Endothelial cell of umbilical vein (primary cell): ENCODE measurements at regions of chr12 and their contacts with region 1.

Region 1: DNA sequence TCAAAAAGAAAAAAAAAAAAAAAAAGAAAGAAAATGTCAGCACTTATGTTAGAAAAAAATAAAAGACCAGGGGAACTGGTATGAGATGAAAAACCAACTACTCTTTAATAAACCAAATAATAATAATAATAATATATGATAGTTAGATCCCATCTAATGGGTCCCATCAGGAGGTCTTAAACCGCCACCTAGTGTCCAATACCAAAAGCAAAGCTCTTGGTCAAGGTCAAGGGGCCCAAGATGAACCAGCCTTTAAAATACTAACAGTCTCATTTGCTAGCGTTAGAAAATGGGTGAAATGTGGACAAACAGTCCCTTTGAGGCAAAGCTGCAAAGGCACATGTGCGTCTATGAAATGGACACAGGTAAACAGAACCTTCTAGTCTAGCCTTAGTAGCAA is 12.3 kb downstream of the BRAP start:
- DNase-seq: peak; percentile 31
- H3K4me3 ChIP-seq: no peak overlapping the region
- H3K27ac ChIP-seq: no peak overlapping the region
- H3K4me1 ChIP-seq: no peaks in the 10 kb centered on the region
- H3K27me3 ChIP-seq: no peaks in the 10 kb centered on the region
- CTCF ChIP-seq: peak; percentile 19 to 37
- POLR2A ChIP-seq: no peak

Region 2: GRCh38 chr12:111330800-111331752 is 342.4 kb before region 1 on chr12:
- CTCF ChIA-PET with region 1: interaction called, 27 read pairs
- POLR2A ChIA-PET with region 1: no interaction called
- dilution Hi-C with region 1: no loop called
- intact Hi-C with region 1: loop called (anchors 5 kb)
- DNase-seq: peak; percentile 59
- H3K4me3 ChIP-seq: no peak overlapping the region
- H3K27ac ChIP-seq: no peak overlapping the region
- H3K4me1 ChIP-seq: no peaks in the 10 kb centered on the region
- H3K27me3 ChIP-seq: peaks cover 0 to 3% of the 10 kb centered on the region in 2 experiments
- CTCF ChIP-seq: peak; percentile 39 to 54
- POLR2A ChIP-seq: no peak

Region 3: GRCh38 chr12:111529424-111530368 is 143.8 kb before region 1 on chr12:
- CTCF ChIA-PET with region 1: interaction called, 8 read pairs
- POLR2A ChIA-PET with region 1: no interaction called
- dilution Hi-C with region 1: no loop called
- intact Hi-C with region 1: loop called (anchors 5 kb)
- DNase-seq: peak; percentile 73
- H3K4me3 ChIP-seq: no peak overlapping the region
- H3K27ac ChIP-seq: no peak overlapping the region
- H3K4me1 ChIP-seq: no peaks in the 10 kb centered on the region
- H3K27me3 ChIP-seq: no peaks in the 10 kb centered on the region
- CTCF ChIP-seq: peak; percentile 69 to 70
- POLR2A ChIP-seq: no peak

Region 4: DNA sequence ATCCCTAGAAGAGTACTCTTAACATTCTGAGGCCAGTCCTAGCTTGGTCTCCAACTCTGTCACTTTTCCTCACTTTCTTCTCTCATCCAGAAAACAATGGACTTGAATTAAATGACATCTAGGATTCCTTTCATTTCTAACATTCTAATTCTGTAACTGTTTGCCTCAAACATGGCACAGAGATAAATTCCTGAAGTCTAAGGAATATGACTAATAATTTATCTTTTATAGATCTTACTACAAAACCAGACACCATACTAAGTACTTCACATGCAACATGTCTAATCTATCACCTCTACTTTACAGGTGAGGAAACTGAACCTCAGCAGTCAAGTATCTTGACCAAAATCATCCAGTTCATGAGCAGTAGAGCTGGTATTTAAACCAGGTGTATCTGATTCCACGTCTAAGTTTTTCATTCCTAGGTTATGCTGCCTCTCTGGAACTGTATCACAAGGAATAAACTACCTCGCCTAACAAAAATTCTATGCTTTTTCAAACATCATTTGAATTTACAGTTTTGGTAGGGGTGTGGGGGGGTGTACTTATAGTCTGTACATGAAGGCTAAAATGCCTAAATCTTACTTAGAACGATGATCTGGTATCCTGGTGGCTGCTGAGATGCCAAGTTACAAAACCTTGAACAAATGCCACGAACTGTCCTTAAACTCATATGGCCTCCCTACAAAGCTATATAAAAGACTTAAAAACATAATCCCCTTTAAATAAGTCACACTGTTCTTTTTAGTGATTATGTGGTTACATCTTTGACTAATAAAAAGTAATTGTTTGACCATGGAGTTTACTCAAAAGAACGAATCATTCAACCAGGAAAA is 116.0 kb before region 1 on chr12:
- CTCF ChIA-PET with region 1: no interaction called
- POLR2A ChIA-PET with region 1: no interaction called
- dilution Hi-C with region 1: no loop called
- intact Hi-C with region 1: no loop called
- DNase-seq: no peak
- H3K4me3 ChIP-seq: no peak overlapping the region
- H3K27ac ChIP-seq: peak overlapping the region; percentile 8
- H3K4me1 ChIP-seq: peaks cover 4% of the 10 kb centered on the region
- H3K27me3 ChIP-seq: no peaks in the 10 kb centered on the region
- CTCF ChIP-seq: no peak
- POLR2A ChIP-seq: no peak

Region 5: GRCh38 chr12:111685744-111686517 is 12.4 kb after region 1 on chr12 and contains the starts of genes ACAD10 and BRAP:
- CTCF ChIA-PET with region 1: interaction called, 12 read pairs
- POLR2A ChIA-PET with region 1: no interaction called
- dilution Hi-C with region 1: no loop called
- intact Hi-C with region 1: no loop called
- DNase-seq: peak; percentile 98
- H3K4me3 ChIP-seq: peak within 1 kb of the TSS; percentile 47 to 85 (median 74)
- H3K27ac ChIP-seq: peak within 1 kb of the TSS; percentile 28
- H3K4me1 ChIP-seq: peaks cover 19% of the 10 kb centered on the region
- H3K27me3 ChIP-seq: no peaks in the 10 kb centered on the region
- CTCF ChIP-seq: no peak
- POLR2A ChIP-seq: peak; percentile 97
- total RNA-seq, gene ACAD10: 14.9 and 16.3 TPM in 2 replicates
- total RNA-seq, gene BRAP: 16.5 and 18.6 TPM in 2 replicates

Region 6: DNA sequence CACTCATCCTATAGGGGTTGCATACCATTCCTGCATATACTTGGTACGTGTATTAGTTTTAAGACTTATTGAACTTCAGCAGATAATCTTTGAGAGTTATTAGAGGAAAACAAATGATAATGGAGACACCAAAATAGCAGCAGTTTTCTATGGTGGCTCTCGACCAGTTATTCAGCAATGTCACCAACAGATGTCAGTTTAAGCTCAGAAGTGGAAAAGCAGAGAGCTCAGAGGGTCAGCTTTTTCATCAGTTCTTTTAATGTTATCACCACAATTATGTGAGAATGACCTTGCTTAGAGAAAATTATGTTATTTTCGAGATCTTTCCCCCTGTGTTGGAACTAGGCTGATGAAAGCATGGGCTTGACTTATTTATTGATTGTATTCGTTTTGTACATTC is 777.2 kb after region 1 on chr12:
- CTCF ChIA-PET with region 1: no interaction called
- POLR2A ChIA-PET with region 1: interaction called, 10 read pairs
- dilution Hi-C with region 1: no loop called
- intact Hi-C with region 1: no loop called
- DNase-seq: no peak
- H3K4me3 ChIP-seq: no peak overlapping the region
- H3K27ac ChIP-seq: no peak overlapping the region
- H3K4me1 ChIP-seq: peaks cover 5% of the 10 kb centered on the region
- H3K27me3 ChIP-seq: no peaks in the 10 kb centered on the region
- CTCF ChIP-seq: no peak
- POLR2A ChIP-seq: no peak